Mammary epithelial cell (primary cell): ENCODE measurements at regions of chr1 and their contacts with region 1.

Region 1: DNA sequence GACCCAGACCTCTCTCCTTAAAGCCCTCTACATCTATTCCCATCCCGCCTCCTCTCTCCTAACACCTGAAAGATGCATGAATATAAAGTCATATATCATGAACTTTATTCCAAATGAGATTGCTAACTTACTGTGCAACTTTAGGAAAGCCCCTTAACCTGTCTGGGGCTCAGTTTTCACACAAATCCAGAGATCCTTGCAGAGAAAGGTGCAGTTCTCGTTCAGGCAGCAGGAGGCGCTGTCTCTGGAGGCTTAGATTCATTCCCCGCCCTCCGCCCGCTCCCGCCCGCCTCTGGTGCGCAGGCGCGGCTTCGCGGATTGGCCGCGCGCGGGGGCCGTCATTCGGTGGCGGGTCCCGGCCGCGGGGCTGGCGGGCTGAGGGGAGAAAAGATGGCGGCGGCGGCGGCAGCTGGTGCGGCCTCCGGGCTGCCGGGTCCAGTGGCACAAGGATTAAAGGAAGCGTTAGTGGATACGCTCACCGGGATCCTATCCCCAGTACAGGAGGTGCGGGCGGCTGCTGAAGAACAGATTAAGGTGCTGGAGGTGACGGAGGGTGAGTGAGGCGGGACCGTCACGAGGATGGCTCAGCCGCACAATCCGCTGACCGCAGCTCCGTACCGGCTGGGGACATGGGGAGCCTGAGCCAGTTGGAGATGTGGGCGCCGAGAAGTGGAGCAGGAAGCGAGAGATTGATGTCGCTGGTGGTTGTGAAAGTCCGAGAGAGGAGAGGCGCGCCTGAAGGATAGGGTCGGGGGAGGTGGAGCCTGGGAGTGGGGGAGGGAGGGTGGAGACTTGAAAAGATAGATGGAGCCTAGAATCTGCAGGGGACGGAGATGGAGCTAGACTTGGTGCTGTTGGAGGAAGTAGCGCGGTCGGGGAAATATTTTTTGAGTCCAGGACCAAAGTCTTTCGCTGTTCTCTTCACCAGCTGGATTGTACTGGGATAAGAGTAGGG is at the start of gene IPO9:
- DNase-seq: peak; percentile 90
- H3K4me3 ChIP-seq: peak within 1 kb of the TSS; percentile 74 to 90 (median 79)
- H3K27ac ChIP-seq: peak within 1 kb of the TSS; percentile 67
- H3K4me1 ChIP-seq: peaks cover 8% of the 10 kb centered on the region
- H3K27me3 ChIP-seq: no peaks in the 10 kb centered on the region
- CTCF ChIP-seq: peak; percentile 84 to 88
- total RNA-seq, gene IPO9: 22.7 to 61.3 TPM

Region 2: GRCh38 chr1:201870397-201870796 is 41.3 kb after region 1 on chr1:
- CTCF ChIA-PET with region 1: no interaction called
- dilution Hi-C with region 1: loop called (anchors 5 kb)
- in situ Hi-C with region 1: no loop called
- intact Hi-C with region 1: loop called (anchors 5 kb)
- DNase-seq: no peak
- H3K4me3 ChIP-seq: no peak overlapping the region
- H3K27ac ChIP-seq: no peak overlapping the region
- H3K4me1 ChIP-seq: no peaks in the 10 kb centered on the region
- H3K27me3 ChIP-seq: no peaks in the 10 kb centered on the region
- CTCF ChIP-seq: no peak

Region 3: GRCh38 chr1:202112839-202113672 is 284.0 kb after region 1 on chr1:
- CTCF ChIA-PET with region 1: no interaction called
- dilution Hi-C with region 1: no loop called
- in situ Hi-C with region 1: no loop called
- intact Hi-C with region 1: loop called (anchors 2 kb)
- DNase-seq: peak; percentile 64
- H3K4me3 ChIP-seq: no peak overlapping the region
- H3K27ac ChIP-seq: peak overlapping the region; percentile 32
- H3K4me1 ChIP-seq: peaks cover 20% of the 10 kb centered on the region
- H3K27me3 ChIP-seq: no peaks in the 10 kb centered on the region
- CTCF ChIP-seq: no peak